ENCODE measurements at regions of chr5 and their contacts with region 1.

Region 1: DNA sequence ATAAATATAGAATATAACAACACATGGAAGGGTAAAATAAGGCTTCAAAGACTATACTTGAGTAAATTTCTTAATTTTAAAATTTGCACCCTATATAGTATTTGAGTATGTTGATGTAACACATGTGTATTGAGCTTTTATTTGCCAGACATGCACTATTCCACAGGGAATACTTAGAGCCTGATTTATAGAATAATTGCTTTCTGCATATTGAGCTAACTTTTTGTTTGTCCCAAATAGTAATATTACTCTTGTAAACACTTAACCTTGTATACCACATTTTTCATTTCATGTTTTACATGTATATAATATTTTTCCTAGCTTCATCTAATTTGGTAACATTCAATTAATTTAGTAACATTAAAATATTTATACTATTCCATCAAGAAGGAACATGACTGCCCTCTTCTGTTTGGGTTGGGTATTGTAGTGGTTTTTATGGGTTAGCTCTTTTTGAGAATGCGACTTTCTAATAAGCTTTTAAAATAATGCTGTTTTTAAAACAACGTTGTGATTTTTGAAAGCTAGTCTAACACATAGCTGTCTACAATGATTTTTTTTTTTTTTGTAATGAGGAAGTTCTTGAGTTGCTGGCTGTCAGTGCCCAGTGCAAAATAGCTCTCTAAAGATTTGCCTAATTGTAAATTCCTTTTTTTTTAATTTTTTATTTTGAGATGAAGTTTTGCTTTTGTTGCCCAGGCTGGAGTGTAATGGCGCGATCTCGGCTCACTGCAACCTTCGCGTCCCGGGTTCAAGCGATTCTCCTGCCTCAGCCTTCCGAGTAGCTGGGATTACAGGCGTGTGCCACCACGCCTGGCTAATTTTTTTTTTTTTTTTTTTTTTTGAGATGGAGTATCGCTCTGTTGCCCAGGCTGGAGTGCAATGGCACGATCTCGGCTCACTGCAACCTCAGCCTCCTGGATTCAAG is 4.8 kb downstream of the SUB1 start:
- DNase-seq: peak in 1 of 2 donors; percentile 57
- H3K4me3 ChIP-seq: no peak overlapping the region
- H3K27ac ChIP-seq: no peak overlapping the region
- H3K4me1 ChIP-seq: peaks cover 0 to 5% of the 10 kb centered on the region in 2 donors
- H3K27me3 ChIP-seq: no peaks in the 10 kb centered on the region
- CTCF ChIP-seq: peak; percentile 64 to 79 (median 72)
- POLR2A ChIP-seq: no peak

Region 2: GRCh38 chr5:32312647-32313523 is 277.3 kb before region 1 on chr5 and contains the start of gene MTMR12:
- intact Hi-C with region 1: loop called (anchors 10 kb)
- DNase-seq: peak; percentile 100
- H3K4me3 ChIP-seq: peak within 1 kb of the TSS; percentile 64 to 97
- H3K27ac ChIP-seq: peak within 1 kb of the TSS; percentile 94 to 99
- H3K4me1 ChIP-seq: peaks cover 0 to 8% of the 10 kb centered on the region in 2 donors
- H3K27me3 ChIP-seq: no peaks in the 10 kb centered on the region
- CTCF ChIP-seq: peak in 3 of 4 experiments; percentile 3 to 32 (median 4)
- POLR2A ChIP-seq: peak; percentile 92 to 96
- total RNA-seq, gene MTMR12: 37.6 to 96.6 (median 54.6) TPM

Region 3: GRCh38 chr5:32489791-32490582 is 100.2 kb before region 1 on chr5:
- intact Hi-C with region 1: loop called (anchors 5 kb)
- DNase-seq: peak; percentile 85 to 89
- H3K4me3 ChIP-seq: no peak overlapping the region
- H3K27ac ChIP-seq: peak overlapping the region; percentile 2 to 54
- H3K4me1 ChIP-seq: no peaks in the 10 kb centered on the region
- H3K27me3 ChIP-seq: no peaks in the 10 kb centered on the region
- CTCF ChIP-seq: peak; percentile 72 to 89 (median 84)
- POLR2A ChIP-seq: no peak

Measured in uterus (tissue), 4 donors.